Mammary epithelial cell (primary cell): ENCODE measurements at regions of chr16 and their contacts with region 1.

Region 1: DNA sequence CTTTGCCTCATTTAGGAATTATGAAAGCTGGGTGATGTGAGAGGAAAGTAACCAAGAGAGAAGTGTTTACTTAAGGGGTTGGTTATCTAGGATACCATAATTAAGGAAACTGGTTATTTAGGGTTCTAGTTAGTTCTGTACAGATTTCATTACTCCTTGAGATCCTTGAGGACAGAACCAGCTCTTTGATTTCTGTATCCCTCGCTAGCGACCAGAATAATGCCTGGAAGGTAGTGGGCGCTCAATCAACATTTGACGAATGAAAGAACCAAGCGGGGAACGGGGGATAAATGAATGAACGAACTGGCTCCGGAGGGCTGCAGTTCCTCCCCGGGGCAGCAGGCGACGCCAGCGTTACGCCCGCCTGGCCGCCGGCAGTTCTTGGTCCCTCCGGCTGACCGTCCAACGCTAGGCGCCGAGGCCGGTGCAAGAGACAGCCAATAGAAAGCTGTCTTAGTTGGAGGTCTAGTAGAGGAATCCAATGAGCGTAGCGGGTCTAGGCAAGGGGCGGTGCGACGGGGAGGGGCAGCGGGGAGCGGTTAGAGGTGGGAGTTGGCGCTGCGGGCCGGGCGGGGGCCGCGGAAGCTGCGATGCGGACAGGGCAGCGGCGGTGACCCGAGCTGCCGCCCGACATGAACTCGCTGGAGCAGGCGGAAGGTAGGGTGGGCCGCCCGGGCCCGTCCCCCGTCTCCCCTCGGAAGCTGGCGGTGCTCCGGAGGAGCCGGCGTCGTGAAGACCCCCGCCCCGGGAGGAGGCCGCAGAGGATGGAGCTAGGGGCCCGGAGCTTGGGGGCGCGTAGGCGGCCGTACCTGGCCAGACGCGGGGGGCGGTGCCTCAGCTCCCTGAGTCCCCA is at the start of gene CNEP1R1:
- DNase-seq: peak; percentile 97
- H3K4me3 ChIP-seq: peak within 1 kb of the TSS; percentile 71 to 98 (median 79)
- H3K27ac ChIP-seq: peak within 1 kb of the TSS; percentile 43
- H3K4me1 ChIP-seq: no peaks in the 10 kb centered on the region
- H3K27me3 ChIP-seq: no peaks in the 10 kb centered on the region
- CTCF ChIP-seq: peak; percentile 99 to 100
- total RNA-seq, gene CNEP1R1: 19.9 to 32.2 TPM

Region 2: GRCh38 chr16:49855280-49855821 is 169.6 kb before region 1 on chr16:
- CTCF ChIA-PET with region 1: interaction called, 3 read pairs
- dilution Hi-C with region 1: no loop called
- in situ Hi-C with region 1: no loop called
- intact Hi-C with region 1: loop called (anchors 5 kb)
- DNase-seq: peak; percentile 71
- H3K4me3 ChIP-seq: peak overlapping the region; percentile 48 to 54 (median 52)
- H3K27ac ChIP-seq: no peak overlapping the region
- H3K4me1 ChIP-seq: peaks cover 12% of the 10 kb centered on the region
- H3K27me3 ChIP-seq: peaks cover 12% of the 10 kb centered on the region
- CTCF ChIP-seq: no peak

Region 3: DNA sequence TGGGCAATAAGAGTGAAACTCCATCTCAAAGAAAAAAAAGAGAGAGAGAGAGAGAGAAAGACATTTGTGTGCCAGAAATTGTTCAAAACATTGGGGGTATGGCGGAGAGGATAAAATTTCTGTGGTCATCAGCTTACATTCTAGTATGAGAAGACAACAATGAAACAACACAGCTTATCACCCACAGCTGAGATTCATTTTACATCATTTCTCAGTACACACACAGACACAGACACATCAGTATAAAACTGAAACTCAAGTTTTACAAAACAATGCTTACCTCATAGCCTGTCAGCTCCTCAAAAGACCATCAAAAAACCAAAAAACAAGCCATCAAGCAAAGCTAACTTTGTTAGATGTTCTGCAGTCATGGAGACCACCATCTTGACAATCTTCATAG is 31.3 kb before region 1 on chr16:
- CTCF ChIA-PET with region 1: interaction called, 10 read pairs
- dilution Hi-C with region 1: no loop called
- in situ Hi-C with region 1: no loop called
- intact Hi-C with region 1: no loop called
- DNase-seq: no peak
- H3K4me3 ChIP-seq: no peak overlapping the region
- H3K27ac ChIP-seq: no peak overlapping the region
- H3K4me1 ChIP-seq: no peaks in the 10 kb centered on the region
- H3K27me3 ChIP-seq: no peaks in the 10 kb centered on the region
- CTCF ChIP-seq: no peak

Region 4: DNA sequence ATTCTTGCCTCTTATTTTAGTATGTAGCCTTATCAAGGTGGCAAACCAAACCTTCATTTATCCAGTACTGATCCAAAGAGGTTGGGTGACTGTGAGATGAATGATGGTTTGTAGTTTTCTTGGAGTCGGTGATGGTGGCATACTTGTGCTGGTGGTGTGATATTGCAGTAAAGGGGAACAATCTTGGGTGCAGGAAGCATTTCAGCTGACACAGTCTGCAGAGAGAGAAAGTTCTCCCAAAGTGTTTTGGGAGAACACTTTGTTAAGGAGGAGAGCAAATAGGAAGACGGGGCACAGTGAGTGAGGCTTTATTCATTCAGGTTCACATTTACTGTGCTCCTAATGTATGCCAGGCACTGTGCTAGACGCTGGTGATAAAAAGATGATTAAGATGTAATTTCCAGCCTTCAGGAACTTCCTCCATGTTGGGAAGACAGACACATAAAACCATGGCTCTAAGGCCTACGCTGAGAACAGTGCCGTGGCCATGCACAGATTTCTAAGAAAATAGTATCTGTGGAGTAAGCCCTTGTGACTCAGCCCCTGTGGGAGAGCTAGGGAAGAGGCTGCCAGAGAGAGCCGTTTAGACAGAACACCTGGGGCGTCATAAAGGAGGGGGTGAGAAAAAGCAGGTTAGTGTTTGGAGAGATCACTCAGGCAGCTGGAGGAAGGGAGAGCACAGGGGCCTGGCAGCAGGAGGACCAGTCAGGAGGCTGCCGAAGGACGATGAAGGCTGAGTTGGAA is 54.7 kb after region 1 on chr16:
- CTCF ChIA-PET with region 1: interaction called, 16 read pairs
- dilution Hi-C with region 1: no loop called
- in situ Hi-C with region 1: no loop called
- intact Hi-C with region 1: no loop called
- DNase-seq: peak; percentile 41
- H3K4me3 ChIP-seq: no peak overlapping the region
- H3K27ac ChIP-seq: no peak overlapping the region
- H3K4me1 ChIP-seq: no peaks in the 10 kb centered on the region
- H3K27me3 ChIP-seq: no peaks in the 10 kb centered on the region
- CTCF ChIP-seq: no peak

Region 5: GRCh38 chr16:50202926-50203624 is 178.2 kb after region 1 on chr16:
- CTCF ChIA-PET with region 1: interaction called, 4 read pairs
- dilution Hi-C with region 1: no loop called
- in situ Hi-C with region 1: loop called in 1 of 2 experiments (anchors 10 kb)
- intact Hi-C with region 1: no loop called
- DNase-seq: peak; percentile 82
- H3K4me3 ChIP-seq: peak overlapping the region in 2 of 3 experiments; percentile 28 to 36
- H3K27ac ChIP-seq: peak overlapping the region; percentile 98
- H3K4me1 ChIP-seq: peaks cover 44% of the 10 kb centered on the region
- H3K27me3 ChIP-seq: no peaks in the 10 kb centered on the region
- CTCF ChIP-seq: no peak

Region 6: GRCh38 chr16:50354629-50355456 is 329.9 kb after region 1 on chr16:
- CTCF ChIA-PET with region 1: interaction called, 32 read pairs
- dilution Hi-C with region 1: no loop called
- in situ Hi-C with region 1: no loop called
- intact Hi-C with region 1: no loop called
- DNase-seq: no peak
- H3K4me3 ChIP-seq: no peak overlapping the region
- H3K27ac ChIP-seq: no peak overlapping the region
- H3K4me1 ChIP-seq: peaks cover 1% of the 10 kb centered on the region
- H3K27me3 ChIP-seq: no peaks in the 10 kb centered on the region
- CTCF ChIP-seq: peak; percentile 47 to 53

Region 7: DNA sequence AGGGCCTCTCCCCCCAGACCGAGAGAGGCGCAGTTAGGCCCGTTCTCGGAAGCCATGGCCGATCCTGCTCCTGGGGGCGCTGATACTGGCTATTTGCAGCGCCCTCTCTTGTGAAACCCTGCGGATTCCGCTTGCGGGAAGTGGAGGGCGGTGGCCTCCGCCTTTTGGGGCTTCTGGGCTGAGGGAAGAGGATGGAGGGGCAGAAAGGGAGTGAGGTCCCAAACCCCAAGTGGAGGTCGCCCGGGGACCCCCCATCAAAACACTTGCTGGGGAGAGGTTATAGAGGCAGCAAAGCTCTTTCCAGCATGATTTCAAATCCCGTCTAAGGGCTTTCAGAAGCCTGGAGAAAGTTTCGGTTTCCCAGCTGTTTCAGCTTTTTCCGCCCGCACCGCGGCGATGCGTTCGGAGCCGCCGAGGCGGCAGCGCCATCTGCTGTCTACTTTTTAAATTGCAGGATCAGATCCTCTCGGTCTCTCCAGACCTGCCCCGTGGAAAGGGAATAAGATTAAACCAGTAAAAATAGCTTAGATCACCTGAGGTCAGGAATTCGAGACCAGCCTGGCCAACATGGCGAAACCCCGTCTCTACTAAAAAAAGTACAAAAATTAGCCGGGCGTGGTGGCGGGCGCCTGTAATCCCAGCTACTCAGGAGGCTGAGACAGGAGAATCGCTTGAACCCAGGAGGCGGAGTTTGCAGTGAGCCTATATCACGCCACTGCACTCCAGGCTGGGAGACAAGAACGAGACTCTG is 640.4 kb after region 1 on chr16:
- CTCF ChIA-PET with region 1: no interaction called
- dilution Hi-C with region 1: no loop called
- in situ Hi-C with region 1: loop called in 1 of 2 experiments (anchors 25 kb)
- intact Hi-C with region 1: no loop called
- DNase-seq: peak; percentile 53
- H3K4me3 ChIP-seq: peak overlapping the region; percentile 22 to 30 (median 23)
- H3K27ac ChIP-seq: no peak overlapping the region
- H3K4me1 ChIP-seq: peaks cover 3% of the 10 kb centered on the region
- H3K27me3 ChIP-seq: no peaks in the 10 kb centered on the region
- CTCF ChIP-seq: peak; percentile 75 to 85